ENCODE measurements at regions of chr5 and their contacts with region 1.

Region 1: GRCh38 chr5:67910546-67910945 is 305.0 kb upstream of the PIK3R1 start:
- DNase-seq: no peak
- ATAC-seq: no peak

Region 2: DNA sequence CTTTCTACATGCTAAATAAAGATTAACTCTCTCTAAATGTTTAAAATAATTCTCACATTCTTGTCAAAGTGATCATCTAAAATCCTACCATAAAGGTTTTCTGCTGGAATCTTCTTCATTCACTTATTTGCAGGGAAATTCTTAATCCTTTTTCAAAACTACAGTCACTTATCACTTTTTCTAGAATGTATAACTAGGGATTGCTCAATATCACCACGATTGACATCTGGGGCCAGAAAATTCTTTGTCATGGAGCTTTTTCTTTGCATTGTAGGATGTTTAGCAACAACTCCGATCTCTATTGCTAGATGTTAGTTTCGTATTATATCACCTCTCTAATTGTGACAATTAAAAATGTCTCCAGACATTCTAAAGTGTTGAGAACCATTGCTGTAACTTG is 39.9 kb before region 1 on chr5:
- intact Hi-C with region 1: no loop called
- DNase-seq: no peak
- ATAC-seq: no peak

Region 3: DNA sequence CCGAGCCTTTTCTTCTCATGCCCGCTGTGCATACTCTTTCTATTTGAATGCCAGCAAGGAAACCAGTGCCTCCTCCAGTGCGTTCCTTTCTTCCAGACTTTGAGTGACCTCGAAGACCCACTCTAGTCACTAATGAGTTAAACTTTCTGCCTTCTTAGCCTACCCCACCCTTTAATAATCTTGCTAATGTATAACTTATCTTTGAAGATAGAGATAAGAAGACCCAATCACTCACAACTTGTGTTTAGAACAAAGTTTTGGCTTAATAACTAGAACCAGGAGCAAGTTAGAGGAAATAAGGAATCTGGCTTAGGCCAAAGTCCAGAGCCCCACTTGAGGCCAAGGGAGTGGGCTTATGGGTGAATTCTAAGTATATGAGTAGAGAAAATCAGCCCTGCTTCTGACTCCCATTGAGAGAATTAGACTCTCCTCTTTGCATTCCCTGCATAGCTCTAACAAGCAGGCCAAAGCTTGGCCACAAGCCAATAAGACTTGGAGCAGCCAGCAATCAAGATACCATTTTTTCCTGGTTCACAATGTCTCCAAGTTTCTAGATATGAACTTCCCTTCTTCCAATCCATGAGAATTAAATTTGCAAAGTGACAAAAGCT is 123.5 kb after region 1 on chr5:
- intact Hi-C with region 1: loop called (anchors 10 kb)
- DNase-seq: no peak
- ATAC-seq: peak; percentile 32